Aorta (tissue), 5 donors: ENCODE measurements at regions of chr18 and their contacts with region 1.

Region 1: DNA sequence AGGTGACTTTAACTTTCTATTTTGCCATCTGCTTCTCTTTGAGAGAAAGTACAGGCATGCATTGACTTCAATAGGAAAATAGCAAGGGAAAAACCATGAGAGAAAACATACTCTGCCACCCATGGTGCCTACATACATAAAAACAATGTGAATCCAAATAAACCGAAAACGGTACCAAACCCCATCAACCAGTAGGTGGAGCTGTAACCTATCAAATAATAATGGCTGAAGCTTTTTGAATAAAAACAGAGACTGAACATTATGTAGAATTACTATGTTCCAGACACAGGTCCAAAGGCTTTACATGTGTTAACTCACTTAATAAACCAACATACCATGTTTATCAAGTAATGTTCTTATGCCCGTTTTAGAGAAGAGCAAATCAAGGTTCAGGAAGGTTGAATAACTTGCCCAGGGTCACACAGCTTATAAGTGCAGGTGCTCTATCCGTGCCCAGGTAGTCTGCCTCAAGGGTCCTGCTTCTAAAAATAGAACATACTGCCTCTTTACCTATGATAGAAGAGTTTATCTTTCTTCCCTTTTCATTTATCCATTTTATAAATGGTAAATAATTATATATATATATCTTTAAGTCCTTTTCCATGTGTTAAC is 293.9 kb upstream of the SYT4 start:
- DNase-seq: no peak
- ATAC-seq: no peak
- H3K4me3 ChIP-seq: no peak overlapping the region
- H3K27ac ChIP-seq: no peak overlapping the region
- H3K4me1 ChIP-seq: no peaks in the 10 kb centered on the region
- H3K27me3 ChIP-seq: no peaks in the 10 kb centered on the region

Region 2: GRCh38 chr18:43587538-43588153 is 16.5 kb after region 1 on chr18:
- intact Hi-C with region 1: loop called in 1 of 2 experiments (anchors 2 kb)
- DNase-seq: no peak
- ATAC-seq: no peak
- H3K4me3 ChIP-seq: no peak overlapping the region
- H3K27ac ChIP-seq: no peak overlapping the region
- H3K4me1 ChIP-seq: no peaks in the 10 kb centered on the region
- H3K27me3 ChIP-seq: no peaks in the 10 kb centered on the region

Region 3: DNA sequence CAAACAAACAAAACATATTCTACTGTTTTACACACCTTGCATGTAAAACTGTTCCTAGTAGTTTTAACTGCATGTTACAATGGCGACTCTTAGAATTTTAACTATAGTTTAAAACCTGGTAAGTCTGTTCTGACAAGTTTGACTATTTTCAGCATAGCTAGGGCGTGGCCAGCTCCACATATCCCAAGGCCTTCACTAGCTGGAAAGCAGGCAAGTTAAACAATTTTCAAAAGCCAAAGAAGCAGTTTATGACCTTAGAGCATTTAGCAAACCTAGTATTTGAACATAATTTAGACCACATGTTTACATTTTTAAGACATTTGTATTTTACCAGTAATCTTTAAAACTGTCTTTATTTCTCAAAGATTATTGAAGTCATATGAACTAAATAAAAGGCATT is 108.9 kb after region 1 on chr18:
- intact Hi-C with region 1: no loop called
- DNase-seq: no peak
- ATAC-seq: no peak
- H3K4me3 ChIP-seq: no peak overlapping the region
- H3K27ac ChIP-seq: no peak overlapping the region
- H3K4me1 ChIP-seq: no peaks in the 10 kb centered on the region
- H3K27me3 ChIP-seq: no peaks in the 10 kb centered on the region

Region 4: GRCh38 chr18:43882358-43883055 is 311.3 kb after region 1 on chr18:
- intact Hi-C with region 1: no loop called
- DNase-seq: peak; percentile 34 to 63
- ATAC-seq: no peak
- H3K4me3 ChIP-seq: no peak overlapping the region
- H3K27ac ChIP-seq: no peak overlapping the region
- H3K4me1 ChIP-seq: no peaks in the 10 kb centered on the region
- H3K27me3 ChIP-seq: no peaks in the 10 kb centered on the region